MCF 10A (cell line): ENCODE measurements at regions of chr10 and their contacts with region 1.

Region 1: GRCh38 chr10:54454271-54454670 is 346.8 kb downstream of the PCDH15 start:
- DNase-seq: no peak
- H3K4me3 Mint-ChIP-seq: no peak overlapping the region
- H3K27ac Mint-ChIP-seq: no peak overlapping the region
- H3K4me1 Mint-ChIP-seq: no peaks in the 10 kb centered on the region
- H3K27me3 Mint-ChIP-seq: no peaks in the 10 kb centered on the region
- CTCF ChIP-seq: no peak

Region 2: DNA sequence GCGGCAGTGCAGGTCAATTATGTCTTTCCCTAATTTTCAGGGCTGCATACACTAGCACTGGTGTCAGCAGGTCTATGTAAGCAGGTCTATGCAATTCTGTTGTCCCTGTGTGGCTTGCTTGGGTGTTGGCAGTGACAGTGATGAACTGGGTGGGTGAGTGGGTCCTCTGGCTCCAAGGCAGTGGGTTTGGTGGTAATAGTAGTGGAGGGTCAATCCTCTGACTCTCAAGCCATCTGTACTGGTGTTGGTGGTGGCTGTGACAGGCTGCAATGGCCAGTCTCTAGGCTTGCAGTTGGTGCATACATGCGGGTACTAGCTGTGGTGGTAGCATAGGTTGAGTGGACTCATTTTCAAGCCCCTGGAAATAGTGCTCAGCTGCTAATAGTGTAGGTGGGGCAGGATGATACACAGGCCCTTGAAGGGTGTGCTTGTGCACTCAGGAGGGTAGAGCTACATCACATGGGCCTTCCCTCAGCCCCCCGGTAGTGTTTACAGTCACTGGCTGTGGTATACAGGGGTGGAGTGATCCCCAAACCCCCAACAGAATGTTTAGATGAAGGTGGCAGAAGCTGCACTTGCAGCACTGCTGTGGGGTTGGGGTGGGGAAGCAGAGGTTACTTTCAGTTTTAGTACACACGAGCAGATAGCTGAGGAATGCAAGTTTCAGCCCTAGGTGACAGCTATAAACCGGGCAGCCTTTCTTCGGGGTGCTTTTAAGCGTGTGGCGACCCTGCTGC is 15.5 kb after region 1 on chr10:
- CTCF ChIA-PET with region 1: no interaction called
- POLR2A ChIA-PET with region 1: no interaction called
- intact Hi-C with region 1: loop called (anchors 1 kb)
- DNase-seq: no peak
- H3K4me3 Mint-ChIP-seq: peak overlapping the region; percentile 55
- H3K27ac Mint-ChIP-seq: no peak overlapping the region
- H3K4me1 Mint-ChIP-seq: peaks cover 5% of the 10 kb centered on the region
- H3K27me3 Mint-ChIP-seq: no peaks in the 10 kb centered on the region
- CTCF ChIP-seq: no peak